ENCODE measurements at regions of chr6 and their contacts with region 1.

Region 1: DNA sequence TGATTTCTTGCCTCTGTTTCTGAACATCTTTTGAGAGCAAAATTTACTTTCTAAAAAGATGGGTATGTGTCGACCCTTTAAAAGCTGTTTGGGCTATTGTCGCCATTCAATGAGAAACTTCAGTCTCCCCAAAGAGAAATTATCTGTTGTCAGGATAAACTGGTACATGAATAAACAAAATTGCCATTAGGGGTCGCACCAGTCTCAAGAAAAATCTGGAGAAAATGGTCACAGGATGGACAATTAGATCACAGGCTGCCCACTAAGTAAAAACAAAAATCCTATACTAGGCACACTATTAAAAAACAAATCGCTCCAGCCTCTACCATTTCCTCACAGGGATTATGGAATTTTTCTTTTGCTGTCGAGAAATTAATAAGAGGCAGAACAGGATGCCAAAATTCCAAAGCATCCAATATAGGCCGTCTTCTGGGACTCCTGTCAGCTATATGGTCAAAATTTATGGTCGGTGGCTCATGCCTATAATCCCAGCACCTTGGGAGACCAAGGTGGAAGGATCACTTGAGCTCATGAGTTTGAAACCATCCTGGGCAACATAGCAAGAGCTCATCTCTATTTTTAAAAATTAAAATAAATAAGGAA is 5.5 kb upstream of the HLA-E start:
- DNase-seq: no peak
- ATAC-seq: peak; percentile 31

Region 2: GRCh38 chr6:30541515-30542403 is 58.0 kb after region 1 on chr6:
- intact Hi-C with region 1: loop called (anchors 5 kb)
- DNase-seq: peak; percentile 77
- ATAC-seq: peak; percentile 78

Measured in left ventricle myocardium superior (tissue), 1 donor.